Left ventricle myocardium superior (tissue), 1 donor: ENCODE measurements at regions of chr6 and their contacts with region 1.

Region 1: DNA sequence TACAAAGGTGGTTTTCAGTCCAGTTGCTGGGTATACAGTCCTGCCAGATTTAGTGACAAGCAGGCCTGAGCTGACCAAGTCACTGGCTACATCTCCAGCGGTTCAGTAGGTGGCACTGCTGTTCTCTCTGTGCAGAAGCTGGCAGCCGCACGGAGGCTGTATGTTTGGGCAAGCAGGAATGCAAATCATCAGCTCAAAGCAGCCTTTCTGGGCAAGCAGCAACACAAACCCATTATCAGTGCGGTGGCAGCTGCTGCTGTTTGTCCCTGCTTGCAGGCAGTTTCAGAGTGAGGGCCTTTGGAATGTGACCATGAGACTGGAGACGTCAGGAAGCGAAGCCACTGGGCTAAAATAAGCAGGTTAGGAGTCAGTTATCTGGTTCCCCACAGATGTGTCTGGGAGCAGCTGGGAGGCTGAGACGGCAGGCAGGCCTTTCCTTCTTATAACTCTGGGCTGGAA is 72.5 kb downstream of the TXLNB start:
- DNase-seq: peak; percentile 89
- ATAC-seq: peak; percentile 99

Region 2: GRCh38 chr6:138785980-138786379 is 433.3 kb before region 1 on chr6:
- intact Hi-C with region 1: no loop called
- DNase-seq: no peak
- ATAC-seq: peak; percentile 72

Region 3: DNA sequence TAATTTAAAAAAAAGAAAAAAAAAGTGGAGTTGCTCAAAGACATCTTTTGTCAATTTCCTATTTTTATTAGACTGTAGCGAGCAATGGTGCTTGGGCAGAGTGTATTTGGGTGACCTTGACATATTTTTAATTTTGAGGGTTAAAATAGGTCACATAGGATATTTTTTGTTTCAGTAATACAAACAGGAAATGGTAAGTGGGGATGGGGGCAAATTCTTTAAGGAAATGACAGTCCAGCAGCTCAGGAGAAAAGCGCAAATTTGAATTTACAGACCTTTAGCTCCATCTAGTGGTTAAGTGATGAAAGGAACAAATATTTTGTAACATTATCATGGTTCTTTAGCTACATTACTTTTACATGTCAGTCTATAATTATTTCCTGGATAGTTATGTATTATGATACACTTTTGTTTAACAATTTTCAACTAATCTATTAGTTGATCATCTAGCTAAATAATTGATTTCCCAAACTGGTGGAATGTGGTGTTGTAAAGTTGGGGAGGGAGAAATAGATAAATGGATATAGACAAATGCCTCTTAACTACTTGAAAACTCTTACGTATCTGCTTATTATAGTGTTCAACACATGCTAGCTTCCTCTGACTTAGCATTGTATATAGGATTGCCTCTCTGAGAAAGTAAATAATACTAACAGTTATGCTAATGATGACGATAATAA is 145.1 kb after region 1 on chr6:
- intact Hi-C with region 1: loop called (anchors 2 kb)
- DNase-seq: no peak
- ATAC-seq: peak; percentile 40